BJ (cell line): ENCODE measurements at regions of chr1 and their contacts with region 1.

Region 1: DNA sequence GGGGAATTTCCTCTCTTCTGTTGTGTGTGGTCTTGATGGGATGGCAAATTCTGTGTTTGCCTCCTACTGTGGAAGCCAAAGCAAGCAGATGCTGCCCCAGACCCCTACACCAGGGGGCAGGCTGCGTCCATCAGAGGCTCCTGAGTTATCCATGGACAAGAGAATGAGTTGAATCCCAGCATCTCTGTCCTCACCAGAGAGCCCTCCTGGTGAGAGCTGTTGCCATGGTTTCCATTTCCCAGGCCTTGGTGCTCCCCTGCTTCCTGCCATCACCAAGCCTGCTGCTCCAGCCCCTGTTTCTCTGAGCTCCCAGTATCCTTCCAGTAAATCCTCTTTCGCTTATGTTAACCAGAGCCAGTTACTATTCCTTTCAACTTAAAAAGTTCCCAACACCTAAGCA is 20.4 kb upstream of the GNG12 start:
- DNase-seq: no peak
- H3K4me3 ChIP-seq: no peak overlapping the region
- H3K27me3 ChIP-seq: no peaks in the 10 kb centered on the region
- CTCF ChIP-seq: peak; percentile 96

Region 2: GRCh38 chr1:67838180-67838910 is 15.4 kb before region 1 on chr1:
- CTCF ChIA-PET with region 1: interaction called, 15 read pairs
- POLR2A ChIA-PET with region 1: no interaction called
- DNase-seq: no peak
- H3K4me3 ChIP-seq: no peak overlapping the region
- H3K27me3 ChIP-seq: no peaks in the 10 kb centered on the region
- CTCF ChIP-seq: no peak

Region 3: GRCh38 chr1:68010090-68010489 is 156.4 kb after region 1 on chr1:
- CTCF ChIA-PET with region 1: interaction called, 120 read pairs
- POLR2A ChIA-PET with region 1: no interaction called
- DNase-seq: no peak
- H3K4me3 ChIP-seq: no peak overlapping the region
- H3K27me3 ChIP-seq: no peaks in the 10 kb centered on the region
- CTCF ChIP-seq: peak; percentile 38; the same call in 1 of the 2 replicates

Region 4: GRCh38 chr1:68111519-68112436 is 258.1 kb after region 1 on chr1:
- CTCF ChIA-PET with region 1: interaction called, 23 read pairs
- POLR2A ChIA-PET with region 1: no interaction called
- DNase-seq: peak; percentile 60
- H3K4me3 ChIP-seq: no peak overlapping the region
- H3K27me3 ChIP-seq: no peaks in the 10 kb centered on the region
- CTCF ChIP-seq: peak; percentile 79